Heart left ventricle (tissue), 16 donors: ENCODE measurements at regions of chr3 and their contacts with region 1.

Region 1: DNA sequence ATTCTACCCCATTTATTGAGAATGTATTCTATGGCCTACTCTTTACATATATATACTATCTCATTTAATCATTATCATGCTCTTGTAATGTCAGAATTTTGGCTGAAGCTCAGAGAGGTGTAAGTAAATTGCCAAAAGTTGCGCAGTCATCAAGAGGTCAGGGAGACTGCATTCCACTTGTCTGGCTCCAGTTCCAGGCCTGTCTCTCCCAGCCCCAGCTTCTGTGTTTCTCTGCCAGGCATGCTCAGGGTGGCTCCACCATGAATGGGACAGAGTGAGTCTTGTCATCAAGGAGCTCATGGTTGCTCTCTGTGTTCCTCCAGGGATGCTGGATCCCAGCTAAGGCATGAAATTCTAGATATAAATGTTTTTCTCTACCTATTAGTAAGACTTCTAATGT is 635.1 kb upstream of the MDFIC2 start:
- DNase-seq: no peak
- ATAC-seq: peak in 1 of 4 donors; percentile 31
- H3K4me3 ChIP-seq: no peak overlapping the region
- H3K27ac ChIP-seq: no peak overlapping the region
- H3K4me1 ChIP-seq: peaks cover 0 to 6% (median 0%) of the 10 kb centered on the region in 12 donors
- H3K27me3 ChIP-seq: no peaks in the 10 kb centered on the region
- CTCF ChIP-seq: no peak
- POLR2A ChIP-seq: no peak

Region 2: DNA sequence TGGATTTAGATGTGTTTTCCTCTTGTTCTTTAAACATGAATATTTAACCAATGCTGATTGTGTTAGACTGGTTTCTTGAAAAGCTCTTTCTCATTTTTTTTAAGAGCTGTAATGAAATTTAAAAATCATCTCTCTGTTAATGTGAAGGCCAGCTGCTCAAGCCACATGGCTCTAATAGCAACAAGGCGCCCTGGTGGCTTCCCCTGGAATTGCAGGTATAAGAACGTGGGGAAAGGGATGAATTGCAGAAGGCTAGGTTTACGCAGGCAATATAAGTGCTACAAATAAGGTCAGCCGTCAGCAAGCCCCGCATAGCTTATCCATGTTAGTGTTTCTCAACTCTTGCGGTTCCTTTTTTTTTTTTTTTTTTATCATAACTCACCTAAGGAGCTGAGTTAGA is 839.5 kb before region 1 on chr3:
- intact Hi-C with region 1: no loop called
- DNase-seq: peak in 1 of 5 donors; percentile 24
- ATAC-seq: no peak
- H3K4me3 ChIP-seq: no peak overlapping the region
- H3K27ac ChIP-seq: no peak overlapping the region
- H3K4me1 ChIP-seq: no peaks in the 10 kb centered on the region
- H3K27me3 ChIP-seq: peaks cover 0 to 7% (median 0%) of the 10 kb centered on the region in 9 donors
- CTCF ChIP-seq: peak in 9 of 12 donors; percentile 13 to 44 (median 32)
- POLR2A ChIP-seq: no peak

Region 3: DNA sequence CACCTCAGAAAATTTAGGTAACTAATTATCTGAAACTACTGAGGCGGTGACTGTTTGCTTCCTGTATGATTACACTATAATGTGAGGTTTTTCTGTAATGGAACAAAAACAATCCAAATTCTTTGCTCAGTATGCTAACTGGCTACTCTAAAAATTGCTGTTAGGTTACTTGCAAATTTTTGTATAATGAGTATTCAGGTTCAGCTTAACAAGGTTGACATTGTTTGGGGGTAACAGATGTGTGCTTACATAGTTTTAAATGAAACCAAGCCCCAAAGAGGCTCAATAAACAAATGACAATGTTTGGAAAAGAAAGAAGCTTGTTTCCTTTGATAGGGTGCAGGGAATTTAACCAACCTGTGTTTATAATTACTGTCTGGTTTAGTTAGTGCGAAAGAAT is 220.6 kb before region 1 on chr3:
- intact Hi-C with region 1: loop called in 1 of 10 experiments (anchors 10 kb)
- DNase-seq: no peak
- ATAC-seq: no peak
- H3K4me3 ChIP-seq: no peak overlapping the region
- H3K27ac ChIP-seq: no peak overlapping the region
- H3K4me1 ChIP-seq: no peaks in the 10 kb centered on the region
- H3K27me3 ChIP-seq: no peaks in the 10 kb centered on the region
- CTCF ChIP-seq: no peak
- POLR2A ChIP-seq: no peak

Region 4: GRCh38 chr3:70824773-70825172 is 122.8 kb before region 1 on chr3:
- intact Hi-C with region 1: no loop called
- DNase-seq: no peak
- ATAC-seq: no peak
- H3K4me3 ChIP-seq: no peak overlapping the region
- H3K27ac ChIP-seq: no peak overlapping the region
- H3K4me1 ChIP-seq: peaks cover 0 to 15% (median 0%) of the 10 kb centered on the region in 12 donors
- H3K27me3 ChIP-seq: no peaks in the 10 kb centered on the region
- CTCF ChIP-seq: no peak
- POLR2A ChIP-seq: no peak